ENCODE measurements at regions of chr15 and their contacts with region 1.

Region 1: DNA sequence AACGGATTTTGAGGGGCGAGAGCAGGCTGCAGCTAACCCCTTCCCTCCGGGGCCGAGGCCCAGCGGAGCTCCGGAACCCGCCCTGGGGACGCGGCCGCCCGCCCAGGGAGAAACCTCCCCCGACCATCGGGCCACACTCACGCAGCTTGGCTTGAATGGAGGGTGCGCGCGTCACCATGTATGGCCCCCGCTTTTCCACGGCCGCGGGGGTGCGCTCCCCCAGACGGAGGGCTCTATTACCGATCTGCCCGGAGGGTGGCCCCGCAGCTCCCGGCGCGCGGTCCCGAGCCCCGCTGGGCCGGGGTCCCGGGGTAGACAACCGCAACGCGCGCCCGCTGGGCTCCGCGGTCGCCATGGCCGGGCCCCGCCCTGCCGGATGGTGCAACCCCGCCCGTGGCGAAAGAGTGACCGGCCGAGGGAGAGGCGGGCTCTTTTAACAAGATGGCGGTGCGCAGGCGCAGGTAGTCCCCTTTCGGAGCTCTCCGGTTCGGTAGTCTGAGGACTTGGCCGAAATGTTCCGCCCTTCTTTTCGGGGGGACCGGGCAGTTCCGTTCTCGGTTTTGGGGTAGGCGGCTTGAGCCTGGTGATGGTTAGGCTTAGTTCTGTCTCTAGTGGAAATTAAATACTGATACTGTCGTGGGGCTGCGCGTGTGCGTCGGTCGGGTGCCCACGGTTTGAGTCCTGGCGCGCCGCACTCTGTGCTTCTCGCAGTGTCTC is at the start of gene FAM219B:
- DNase-seq: peak; percentile 89
- H3K4me3 Mint-ChIP-seq: peak within 1 kb of the TSS; percentile 99
- H3K27ac Mint-ChIP-seq: peak within 1 kb of the TSS; percentile 97
- H3K4me1 Mint-ChIP-seq: peaks cover 32% of the 10 kb centered on the region
- H3K27me3 Mint-ChIP-seq: no peaks in the 10 kb centered on the region
- total RNA-seq, gene FAM219B: 63.0 to 70.1 TPM

Region 2: DNA sequence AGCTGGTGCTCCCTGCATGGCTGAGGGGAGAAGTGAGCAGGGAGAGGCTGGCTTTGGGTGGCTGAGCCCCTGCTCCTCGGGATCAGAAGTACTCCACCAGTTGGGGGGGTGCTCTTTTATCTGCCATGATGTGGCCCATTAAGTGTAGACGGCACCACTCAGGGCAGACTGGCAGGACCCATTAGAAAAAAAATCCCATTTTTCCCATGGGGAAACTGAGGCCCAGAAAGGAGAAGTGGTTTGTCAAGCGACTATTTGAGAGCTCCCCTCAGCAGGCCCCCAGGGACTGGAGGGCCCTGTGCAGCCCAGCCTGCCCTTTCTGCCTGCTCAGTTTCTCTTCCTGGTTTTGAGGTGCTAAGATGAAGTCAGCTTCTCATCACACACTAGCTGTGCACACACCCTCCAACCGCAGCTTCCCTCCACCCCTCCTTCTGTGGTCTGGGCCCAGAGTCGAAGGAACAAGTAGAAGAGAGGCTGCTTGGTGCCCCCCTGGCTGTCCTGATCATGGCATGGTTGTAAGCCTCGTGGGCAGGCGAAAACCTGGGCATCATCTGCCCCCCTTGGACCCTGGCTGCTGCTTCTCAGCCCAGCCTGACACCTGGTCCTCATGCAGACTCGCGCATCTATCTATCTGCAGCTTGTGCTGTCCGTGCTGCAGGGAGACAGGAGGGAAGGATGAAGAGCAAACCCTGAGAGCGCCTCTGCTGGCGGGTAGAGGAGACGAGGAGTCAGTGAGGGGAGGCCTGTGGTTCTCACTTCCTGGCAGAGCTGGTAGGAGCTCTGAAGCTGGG is 119.2 kb before region 1 on chr15:
- CTCF ChIA-PET with region 1: interaction called, 12 read pairs
- POLR2A ChIA-PET with region 1: interaction called, 4 read pairs
- intact Hi-C with region 1: no loop called
- DNase-seq: peak; percentile 97
- H3K4me3 Mint-ChIP-seq: peak overlapping the region; percentile 90
- H3K27ac Mint-ChIP-seq: peak overlapping the region; percentile 99
- H3K4me1 Mint-ChIP-seq: peaks cover 53% of the 10 kb centered on the region
- H3K27me3 Mint-ChIP-seq: no peaks in the 10 kb centered on the region

Region 3: DNA sequence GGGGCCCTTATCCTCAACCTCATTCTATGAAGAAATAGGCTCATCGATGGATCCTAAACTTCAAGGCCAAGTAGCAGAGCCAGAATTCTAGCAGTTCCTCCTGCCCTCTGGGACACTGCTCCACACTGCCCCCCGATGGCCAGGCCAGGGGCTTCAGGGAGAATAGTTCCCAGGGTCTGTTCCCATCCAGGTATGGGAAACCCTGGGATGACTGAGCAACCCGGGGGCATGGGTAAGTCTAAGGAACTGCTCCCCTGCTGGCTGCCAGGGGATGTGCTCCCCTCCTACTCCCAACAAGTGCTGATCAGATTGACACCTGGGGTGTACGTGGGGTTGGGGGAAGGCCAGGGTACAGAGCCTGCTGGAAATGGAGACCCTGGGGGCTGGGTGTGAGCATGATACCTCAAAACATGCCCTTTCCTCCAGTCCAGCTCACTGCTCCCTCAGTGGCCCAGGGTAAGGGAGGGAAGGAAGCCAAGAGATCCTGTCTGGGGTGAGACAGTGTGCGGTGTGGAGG is 71.2 kb before region 1 on chr15:
- CTCF ChIA-PET with region 1: interaction called, 41 read pairs
- POLR2A ChIA-PET with region 1: no interaction called
- intact Hi-C with region 1: no loop called
- DNase-seq: peak; percentile 70
- H3K4me3 Mint-ChIP-seq: no peak overlapping the region
- H3K27ac Mint-ChIP-seq: no peak overlapping the region
- H3K4me1 Mint-ChIP-seq: no peaks in the 10 kb centered on the region
- H3K27me3 Mint-ChIP-seq: no peaks in the 10 kb centered on the region

Region 4: DNA sequence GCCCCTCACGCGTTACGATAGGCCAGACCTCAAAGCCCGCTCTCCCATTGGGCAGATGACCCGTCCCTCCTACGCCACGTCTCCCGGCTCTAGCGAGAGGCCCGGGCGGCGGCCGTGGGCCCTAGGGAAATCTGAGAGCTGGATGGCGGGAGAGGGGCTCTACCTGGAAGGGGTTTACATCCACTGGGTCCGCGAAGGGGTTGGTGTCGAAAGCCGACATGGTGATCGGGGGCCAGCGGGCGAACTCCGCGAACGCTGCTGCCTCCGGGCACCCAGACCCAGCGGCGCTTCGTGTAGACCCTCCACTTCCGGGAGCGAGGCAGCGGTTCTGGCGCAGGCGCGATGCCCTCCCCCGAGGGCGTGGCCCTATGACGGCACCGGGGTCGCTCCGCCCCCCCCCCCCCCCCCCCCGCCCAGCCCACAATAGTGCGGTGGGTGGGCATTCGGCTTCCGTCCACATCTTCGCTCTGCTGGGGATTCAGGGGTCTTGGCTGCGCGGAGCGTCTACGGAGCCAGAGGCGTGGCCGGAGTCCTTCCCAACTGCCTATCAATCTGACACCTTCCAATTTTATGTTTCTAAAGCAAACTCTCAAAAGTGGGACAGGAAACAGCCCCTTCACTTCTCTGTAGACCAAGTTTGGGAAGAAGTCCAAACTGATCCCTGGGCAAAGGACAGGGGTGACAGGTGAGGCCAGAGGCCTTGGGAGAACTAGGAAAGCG is 33.4 kb before region 1 on chr15 and contains the start of gene SCAMP2:
- CTCF ChIA-PET with region 1: interaction called, 49 read pairs
- POLR2A ChIA-PET with region 1: interaction called, 8 read pairs
- intact Hi-C with region 1: loop called (anchors 2 kb)
- DNase-seq: peak; percentile 93
- H3K4me3 Mint-ChIP-seq: peak within 1 kb of the TSS; percentile 96
- H3K27ac Mint-ChIP-seq: peak within 1 kb of the TSS; percentile 90
- H3K4me1 Mint-ChIP-seq: peaks cover 45% of the 10 kb centered on the region
- H3K27me3 Mint-ChIP-seq: no peaks in the 10 kb centered on the region
- total RNA-seq, gene SCAMP2: 77.6 to 79.5 TPM

Region 5: GRCh38 chr15:74937596-74938296 is 31.1 kb after region 1 on chr15 and contains the start of gene COX5A:
- CTCF ChIA-PET with region 1: interaction called, 14 read pairs
- POLR2A ChIA-PET with region 1: interaction called, 4 read pairs
- intact Hi-C with region 1: no loop called
- DNase-seq: peak; percentile 96
- H3K4me3 Mint-ChIP-seq: peak within 1 kb of the TSS; percentile 86
- H3K27ac Mint-ChIP-seq: peak within 1 kb of the TSS; percentile 87
- H3K4me1 Mint-ChIP-seq: peaks cover 29% of the 10 kb centered on the region
- H3K27me3 Mint-ChIP-seq: no peaks in the 10 kb centered on the region
- total RNA-seq, gene COX5A: 322 TPM

Measured in activated CD4-positive, alpha-beta memory T cell treated with anti-CD3 and anti-CD28 coated beads for 36 hours (primary cell).